Activated naive CD4-positive, alpha-beta T cell treated with anti-CD3 and anti-CD28 coated beads for 36 hours (primary cell): ENCODE measurements at regions of chr1 and their contacts with region 1.

Region 1: GRCh38 chr1:108107658-108108518 is 92.3 kb downstream of the SLC25A24 start:
- DNase-seq: peak; percentile 76
- H3K4me3 Mint-ChIP-seq: no peak overlapping the region
- H3K27ac Mint-ChIP-seq: peak overlapping the region; percentile 71
- H3K4me1 Mint-ChIP-seq: peaks cover 15% of the 10 kb centered on the region
- H3K27me3 Mint-ChIP-seq: no peaks in the 10 kb centered on the region

Region 2: GRCh38 chr1:107877092-107877491 is 230.8 kb before region 1 on chr1:
- CTCF ChIA-PET with region 1: no interaction called
- intact Hi-C with region 1: loop called (anchors 5 kb)
- DNase-seq: no peak
- H3K4me3 Mint-ChIP-seq: no peak overlapping the region
- H3K27ac Mint-ChIP-seq: no peak overlapping the region
- H3K4me1 Mint-ChIP-seq: peaks cover 39% of the 10 kb centered on the region
- H3K27me3 Mint-ChIP-seq: no peaks in the 10 kb centered on the region

Region 3: GRCh38 chr1:108041360-108042142 is 66.3 kb before region 1 on chr1:
- CTCF ChIA-PET with region 1: no interaction called
- intact Hi-C with region 1: loop called (anchors 2 kb)
- DNase-seq: peak; percentile 43
- H3K4me3 Mint-ChIP-seq: peak overlapping the region; percentile 14
- H3K27ac Mint-ChIP-seq: peak overlapping the region; percentile 17
- H3K4me1 Mint-ChIP-seq: peaks cover 36% of the 10 kb centered on the region
- H3K27me3 Mint-ChIP-seq: no peaks in the 10 kb centered on the region